ENCODE measurements at regions of chr22 and their contacts with region 1.

Region 1: DNA sequence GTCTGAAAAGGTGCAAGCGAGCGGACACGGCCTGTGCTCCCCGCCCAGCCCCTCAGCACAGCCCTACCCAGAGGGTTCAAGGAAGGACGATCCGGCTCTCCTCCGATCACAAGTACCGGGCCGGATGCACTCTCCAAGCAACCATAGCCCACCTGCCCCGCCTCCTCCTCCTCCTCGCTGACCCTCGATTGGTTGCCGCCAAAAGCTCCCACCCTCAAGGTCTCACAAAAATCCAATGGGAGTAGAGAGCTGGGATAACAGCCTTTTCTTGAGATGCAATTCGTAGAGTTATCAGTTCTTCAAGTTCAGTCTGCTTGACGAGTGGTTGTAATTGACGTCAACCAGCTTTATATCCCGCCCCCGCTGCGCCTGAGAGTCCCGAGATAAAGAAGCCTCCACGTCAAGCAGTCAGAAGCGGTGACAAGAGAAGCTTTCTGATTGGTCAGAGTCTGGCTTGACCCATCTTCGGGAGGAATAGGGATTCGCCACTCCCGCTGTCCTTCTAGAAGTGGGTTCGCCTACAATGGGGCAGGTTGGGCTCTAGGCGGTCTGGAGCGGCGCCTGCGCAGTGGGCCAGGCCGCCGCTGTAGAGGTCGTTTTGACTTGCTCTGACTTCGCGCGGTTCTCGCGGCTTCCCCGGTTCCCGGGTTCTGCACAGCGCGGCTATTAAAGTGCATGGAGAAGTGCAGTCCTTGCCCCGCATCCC is at the start of gene IFT27:
- DNase-seq: peak; percentile 98
- H3K4me3 Mint-ChIP-seq: peak within 1 kb of the TSS; percentile 91
- H3K27ac Mint-ChIP-seq: peak within 1 kb of the TSS; percentile 92
- H3K4me1 Mint-ChIP-seq: peaks cover 29% of the 10 kb centered on the region
- H3K27me3 Mint-ChIP-seq: no peaks in the 10 kb centered on the region
- total RNA-seq, gene IFT27: 30.0 and 34.7 TPM in 2 replicates

Region 2: DNA sequence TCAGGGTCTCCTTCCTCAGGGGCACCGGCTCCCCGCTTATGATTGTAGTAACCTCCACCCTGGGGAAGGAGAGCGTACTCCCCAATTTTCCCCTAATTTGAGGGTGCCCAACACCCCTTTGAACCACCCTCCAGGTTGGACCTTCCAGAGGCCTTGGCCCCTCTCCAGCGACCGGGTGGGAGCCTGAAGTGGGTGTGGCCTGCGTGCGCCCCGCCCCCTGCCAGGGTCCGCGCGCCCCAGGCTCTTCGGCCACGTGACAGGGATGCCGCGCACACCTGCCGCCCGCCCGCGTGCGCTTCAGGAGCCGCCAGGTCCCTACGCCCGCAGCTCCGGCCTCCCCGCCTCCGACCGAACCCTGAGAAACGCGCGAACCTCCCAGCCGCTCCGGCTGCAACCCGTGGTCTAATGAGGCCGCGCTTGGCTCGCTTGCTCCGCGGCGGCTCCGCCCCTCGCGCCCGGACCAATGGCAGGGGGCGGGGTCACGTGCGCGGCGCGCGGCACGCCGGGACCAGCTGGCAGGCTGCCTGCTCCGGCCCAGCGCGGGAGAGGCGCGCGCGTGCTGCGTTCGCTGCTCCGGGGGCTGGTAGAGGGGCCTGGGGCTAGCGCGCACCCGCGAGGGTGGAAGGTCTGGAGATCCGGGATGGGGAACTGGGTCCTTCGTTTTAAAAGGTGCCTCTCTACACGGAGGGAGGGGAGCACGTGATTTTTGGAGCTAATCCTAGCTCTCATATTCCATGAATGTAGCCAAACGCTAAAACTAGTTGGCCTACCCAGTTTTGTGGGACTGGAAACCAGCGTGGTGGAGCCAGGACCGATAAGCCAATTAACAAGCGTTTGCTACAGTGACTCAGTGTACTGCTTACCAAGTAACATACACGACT is 269.2 kb before region 1 on chr22 and contains the start of gene FOXRED2:
- intact Hi-C with region 1: no loop called
- DNase-seq: peak; percentile 92
- H3K4me3 Mint-ChIP-seq: peak within 1 kb of the TSS; percentile 72
- H3K27ac Mint-ChIP-seq: no peak within 1 kb of the TSS
- H3K4me1 Mint-ChIP-seq: peaks cover 5% of the 10 kb centered on the region
- H3K27me3 Mint-ChIP-seq: no peaks in the 10 kb centered on the region
- total RNA-seq, gene FOXRED2: 17.6 and 21.0 TPM in 2 replicates

Region 3: DNA sequence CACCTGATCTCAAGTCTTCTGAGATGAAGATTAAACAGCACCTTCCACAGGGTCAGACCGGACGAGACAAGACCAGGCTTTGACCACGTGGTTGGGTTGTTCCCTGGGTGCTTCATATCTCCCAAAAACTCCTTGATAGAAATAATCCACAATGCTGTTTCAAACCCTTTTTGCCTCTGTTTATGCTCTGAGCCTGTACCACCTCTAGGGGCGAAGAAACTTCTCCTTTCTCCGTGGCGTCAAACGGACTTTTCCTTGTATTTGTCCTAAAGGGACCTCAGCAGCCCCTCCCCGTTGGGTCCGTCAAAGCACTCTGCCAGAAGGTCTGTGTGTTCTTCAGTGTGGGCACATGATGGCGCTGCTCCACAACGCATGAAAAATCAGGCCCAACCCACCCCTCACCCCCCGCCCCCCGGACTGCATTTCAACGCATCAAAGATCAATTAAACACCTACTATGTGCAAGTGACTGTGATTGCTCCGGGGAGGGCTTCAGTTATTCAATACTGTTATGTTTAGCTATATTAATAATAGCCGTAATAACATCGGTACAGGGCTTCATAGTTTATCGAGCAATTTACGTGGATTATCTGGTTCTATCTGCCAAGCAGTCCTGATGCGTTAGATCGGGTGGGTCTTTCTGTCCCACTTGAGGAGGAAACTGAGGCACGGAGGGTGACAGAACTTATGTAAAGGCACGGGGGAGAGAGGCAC is 229.9 kb before region 1 on chr22:
- intact Hi-C with region 1: loop called (anchors 10 kb)
- DNase-seq: no peak
- H3K4me3 Mint-ChIP-seq: no peak overlapping the region
- H3K27ac Mint-ChIP-seq: no peak overlapping the region
- H3K4me1 Mint-ChIP-seq: peaks cover 23% of the 10 kb centered on the region
- H3K27me3 Mint-ChIP-seq: peaks cover 4% of the 10 kb centered on the region

Region 4: DNA sequence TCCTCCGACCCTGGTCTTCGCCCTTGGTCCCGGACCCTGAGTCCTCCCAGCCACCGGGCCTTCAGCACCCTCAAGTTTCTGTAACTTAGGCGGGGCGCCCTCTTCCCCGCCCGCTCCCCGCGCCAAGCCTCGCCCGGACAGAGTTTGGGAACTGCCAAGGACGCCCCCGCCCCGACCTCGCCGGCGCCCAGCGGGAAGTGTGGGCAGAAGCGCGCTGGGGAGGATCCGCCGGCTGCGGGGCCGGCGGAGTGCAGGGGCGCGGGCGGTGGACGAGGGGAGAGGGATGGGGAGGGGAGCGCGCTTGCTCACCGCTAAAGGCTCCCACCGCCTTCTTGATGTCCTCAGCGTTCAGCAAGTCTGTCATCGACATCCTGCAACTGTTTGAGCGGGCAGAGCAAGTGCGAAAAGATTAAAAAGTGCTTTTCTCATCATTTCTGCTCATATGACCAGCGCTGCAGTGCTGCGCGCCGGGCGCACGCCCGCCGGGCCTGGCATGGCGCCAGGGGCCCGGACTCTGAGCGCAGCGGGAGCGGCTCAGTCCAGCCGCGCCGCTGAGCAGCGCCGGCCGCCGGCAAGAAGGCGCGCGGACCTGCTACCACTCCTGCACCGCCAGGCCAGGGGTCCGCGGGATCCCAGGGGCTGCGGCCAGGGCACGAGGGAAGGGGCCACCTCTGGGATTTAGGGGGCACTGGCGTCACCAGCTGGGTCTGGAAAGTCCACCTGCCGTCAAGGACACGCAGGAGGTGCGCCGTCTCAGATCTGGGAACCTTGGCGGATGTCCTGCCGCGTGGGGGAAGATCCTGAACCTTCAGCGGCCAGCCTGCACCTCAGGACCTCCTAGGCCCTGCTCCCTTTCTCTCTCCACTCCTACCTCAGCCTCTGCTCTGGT is 40.8 kb after region 1 on chr22 and contains the start of gene PVALB:
- intact Hi-C with region 1: no loop called
- DNase-seq: no peak
- H3K4me3 Mint-ChIP-seq: no peak within 1 kb of the TSS
- H3K27ac Mint-ChIP-seq: no peak within 1 kb of the TSS
- H3K4me1 Mint-ChIP-seq: no peaks in the 10 kb centered on the region
- H3K27me3 Mint-ChIP-seq: peaks cover 64% of the 10 kb centered on the region
- total RNA-seq, gene PVALB: not detected in 2 replicates

Measured in activated T-helper 2 cell treated with anti-CD3 and anti-CD28 coated beads, Interferon-gamma antibody, Interleukin-2, Interleukin-4, amounts not matched to agents 10 μg/mL and 5 μg/mL and 100 μg/mL, durations not matched to agents 14 hours and 24 hours and 36 hours (primary cell).